Right lobe of liver (tissue), 6 donors: ENCODE measurements at regions of chr1 and their contacts with region 1.

Region 1: GRCh38 chr1:153670859-153671627 is at the start of gene ILF2:
- DNase-seq: peak; percentile 95 to 97 (median 97)
- ATAC-seq: peak; percentile 89 to 96 (median 95)
- H3K4me3 ChIP-seq: peak within 1 kb of the TSS; percentile 63 to 86 (median 64)
- H3K27ac ChIP-seq: peak within 1 kb of the TSS; percentile 73 to 85 (median 79)
- H3K4me1 ChIP-seq: peaks cover 0 to 21% (median 6%) of the 10 kb centered on the region in 4 donors
- H3K27me3 ChIP-seq: no peaks in the 10 kb centered on the region
- CTCF ChIP-seq: peak in 3 of 4 donors; percentile 11 to 46 (median 43)
- POLR2A ChIP-seq: peak; percentile 79
- total RNA-seq, gene ILF2: 30.2 to 55.9 (median 38.7) TPM

Region 2: GRCh38 chr1:153683854-153684253 is 12.8 kb after region 1 on chr1:
- intact Hi-C with region 1: no loop called
- DNase-seq: peak in 1 of 3 donors; percentile 12
- ATAC-seq: no peak
- H3K4me3 ChIP-seq: no peak overlapping the region
- H3K27ac ChIP-seq: no peak overlapping the region
- H3K4me1 ChIP-seq: peaks cover 0 to 8% (median 0%) of the 10 kb centered on the region in 4 donors
- H3K27me3 ChIP-seq: peaks cover 0 to 7% of the 10 kb centered on the region in 2 donors
- CTCF ChIP-seq: no peak
- POLR2A ChIP-seq: no peak

Region 3: DNA sequence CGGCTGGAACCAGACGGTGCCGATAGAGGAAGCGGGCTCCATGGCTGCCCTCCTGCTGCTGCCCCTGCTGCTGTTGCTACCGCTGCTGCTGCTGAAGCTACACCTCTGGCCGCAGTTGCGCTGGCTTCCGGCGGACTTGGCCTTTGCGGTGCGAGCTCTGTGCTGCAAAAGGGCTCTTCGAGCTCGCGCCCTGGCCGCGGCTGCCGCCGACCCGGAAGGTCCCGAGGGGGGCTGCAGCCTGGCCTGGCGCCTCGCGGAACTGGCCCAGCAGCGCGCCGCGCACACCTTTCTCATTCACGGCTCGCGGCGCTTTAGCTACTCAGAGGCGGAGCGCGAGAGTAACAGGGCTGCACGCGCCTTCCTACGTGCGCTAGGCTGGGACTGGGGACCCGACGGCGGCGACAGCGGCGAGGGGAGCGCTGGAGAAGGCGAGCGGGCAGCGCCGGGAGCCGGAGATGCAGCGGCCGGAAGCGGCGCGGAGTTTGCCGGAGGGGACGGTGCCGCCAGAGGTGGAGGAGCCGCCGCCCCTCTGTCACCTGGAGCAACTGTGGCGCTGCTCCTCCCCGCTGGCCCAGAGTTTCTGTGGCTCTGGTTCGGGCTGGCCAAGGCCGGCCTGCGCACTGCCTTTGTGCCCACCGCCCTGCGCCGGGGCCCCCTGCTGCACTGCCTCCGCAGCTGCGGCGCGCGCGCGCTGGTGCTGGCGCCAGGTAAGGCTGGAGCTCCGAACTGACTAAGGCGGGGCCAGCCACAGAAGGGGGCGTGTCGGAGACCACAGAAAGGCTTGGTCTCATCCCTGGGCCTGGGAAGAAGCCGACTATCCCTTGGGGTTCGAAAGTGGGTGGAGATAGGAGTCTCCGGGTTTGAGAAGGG is 104.7 kb after region 1 on chr1:
- intact Hi-C with region 1: loop called in 1 of 2 experiments (anchors 10 kb)
- DNase-seq: peak; percentile 81 to 85 (median 82)
- ATAC-seq: peak; percentile 45 to 57 (median 49)
- H3K4me3 ChIP-seq: peak overlapping the region; percentile 61 to 73 (median 68)
- H3K27ac ChIP-seq: peak overlapping the region; percentile 63 to 83 (median 76)
- H3K4me1 ChIP-seq: peaks cover 0 to 50% (median 20%) of the 10 kb centered on the region in 4 donors
- H3K27me3 ChIP-seq: no peaks in the 10 kb centered on the region
- CTCF ChIP-seq: peak in 1 of 4 donors; percentile 4
- POLR2A ChIP-seq: peak; percentile 38

Region 4: GRCh38 chr1:153789478-153790034 is 118.5 kb after region 1 on chr1:
- intact Hi-C with region 1: no loop called
- DNase-seq: peak; percentile 76 to 91 (median 87)
- ATAC-seq: peak; percentile 88 to 95 (median 94)
- H3K4me3 ChIP-seq: no peak overlapping the region
- H3K27ac ChIP-seq: peak overlapping the region; percentile 34 to 62 (median 55)
- H3K4me1 ChIP-seq: peaks cover 0 to 23% (median 6%) of the 10 kb centered on the region in 4 donors
- H3K27me3 ChIP-seq: no peaks in the 10 kb centered on the region
- CTCF ChIP-seq: peak in 2 of 4 donors; percentile 17 to 24
- POLR2A ChIP-seq: no peak

Region 5: GRCh38 chr1:153985941-153986761 is 315.1 kb after region 1 on chr1 and contains the start of gene RAB13:
- intact Hi-C with region 1: loop called in 1 of 2 experiments (anchors 10 kb)
- DNase-seq: peak; percentile 91 to 93 (median 92)
- ATAC-seq: peak; percentile 83 to 94 (median 86)
- H3K4me3 ChIP-seq: peak within 1 kb of the TSS; percentile 52 to 76 (median 70)
- H3K27ac ChIP-seq: peak within 1 kb of the TSS; percentile 58 to 83 (median 75)
- H3K4me1 ChIP-seq: peaks cover 0 to 16% (median 5%) of the 10 kb centered on the region in 4 donors
- H3K27me3 ChIP-seq: no peaks in the 10 kb centered on the region
- CTCF ChIP-seq: no peak
- POLR2A ChIP-seq: peak; percentile 30
- total RNA-seq, gene RAB13: 11.9 to 52.2 (median 47.9) TPM